ENCODE measurements at regions of chr16 and their contacts with region 1.

Region 1: GRCh38 chr16:71358464-71358998 is at the start of gene CALB2:
- DNase-seq: peak; percentile 47
- H3K4me3 Mint-ChIP-seq: no peak within 1 kb of the TSS
- H3K27ac Mint-ChIP-seq: no peak within 1 kb of the TSS
- H3K4me1 Mint-ChIP-seq: no peaks in the 10 kb centered on the region
- H3K27me3 Mint-ChIP-seq: peaks cover 3% of the 10 kb centered on the region
- total RNA-seq, gene CALB2: not detected in 2 replicates

Region 2: DNA sequence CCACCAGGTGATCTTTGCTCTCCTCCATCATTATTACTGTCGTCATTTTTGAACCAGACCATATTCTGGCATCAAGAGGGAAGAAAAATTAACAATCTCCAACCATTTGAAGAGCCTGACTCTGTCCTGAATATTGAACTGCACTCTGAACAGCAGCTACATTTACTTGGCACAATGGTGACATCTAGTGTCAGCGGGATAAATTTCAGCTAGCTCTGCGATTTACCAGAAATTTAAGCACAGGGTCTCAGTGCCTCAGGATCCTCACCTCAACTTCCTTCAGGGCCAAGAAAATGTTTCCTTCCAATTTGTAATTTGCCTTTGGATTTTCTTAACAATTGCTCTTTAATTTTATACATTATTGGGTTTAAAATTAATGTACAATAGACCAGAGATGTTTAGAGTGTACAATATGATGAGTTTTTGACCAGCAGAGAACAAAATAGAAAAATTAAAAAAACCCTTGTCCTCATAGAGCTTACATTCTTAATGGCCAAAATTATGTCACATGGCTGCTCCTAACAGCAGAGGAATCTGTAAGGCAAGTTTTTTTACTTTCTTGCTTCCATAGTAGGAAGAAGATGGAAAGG is 141.3 kb after region 1 on chr16:
- intact Hi-C with region 1: loop called (anchors 1 kb)
- DNase-seq: no peak
- H3K4me3 Mint-ChIP-seq: no peak overlapping the region
- H3K27ac Mint-ChIP-seq: no peak overlapping the region
- H3K4me1 Mint-ChIP-seq: no peaks in the 10 kb centered on the region
- H3K27me3 Mint-ChIP-seq: peaks cover 2% of the 10 kb centered on the region

Measured in activated T-helper 1 cell treated with anti-CD3 and anti-CD28 coated beads, Interleukin-12 subunit alpha, Interleukin-12 subunit beta, Interleukin-2, Interleukin-4 antibody, amounts not matched to agents 30 ng/mL and 10 ng/mL and 1 ng/mL, durations not matched to agents 14 hours and 24 hours and 36 hours (primary cell).